SK-N-SH (cell line): ENCODE measurements at regions of chr17 and their contacts with region 1.

Region 1: DNA sequence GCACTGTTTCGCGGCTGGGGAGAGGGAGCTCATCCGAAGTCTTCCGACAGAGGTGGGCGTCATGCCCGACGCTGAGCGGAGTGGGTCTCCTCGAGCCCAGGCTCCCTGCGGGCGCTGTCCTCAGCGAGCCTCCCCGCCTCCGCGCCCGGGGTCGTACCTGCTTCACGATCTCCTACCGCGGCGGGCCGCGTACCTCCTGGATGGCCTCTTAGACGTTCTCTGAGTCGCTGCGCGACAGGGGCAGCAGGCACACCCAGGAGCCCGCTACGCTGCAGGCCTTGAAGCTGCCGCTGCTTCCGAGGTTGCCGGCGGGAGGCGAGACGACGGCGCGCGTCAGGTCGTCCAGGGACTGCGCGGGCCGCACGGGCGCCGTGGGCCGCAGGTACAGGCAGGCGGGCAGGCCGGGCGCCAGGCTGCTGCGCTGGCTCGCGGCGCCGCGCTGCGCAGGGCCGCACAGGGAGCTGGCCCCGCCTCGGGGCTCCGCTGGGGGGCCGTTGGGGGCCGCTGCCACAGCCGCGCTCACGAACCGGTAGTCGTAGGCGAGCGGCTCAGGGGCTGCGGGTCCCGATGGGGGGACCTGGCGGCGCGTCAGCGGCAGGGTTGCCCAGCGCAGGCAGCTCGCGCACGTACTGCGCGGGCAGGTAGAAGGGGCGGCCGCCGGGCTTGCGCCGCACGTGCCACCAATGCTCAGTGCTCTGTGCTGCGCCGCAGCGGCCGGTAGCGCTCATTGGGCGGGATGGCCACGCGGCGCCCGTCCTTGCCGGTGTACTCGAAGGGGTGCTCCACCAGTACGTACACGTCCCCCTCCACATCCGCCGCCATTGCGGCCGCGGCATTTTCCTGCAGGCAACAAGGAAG is 116.4 kb upstream of the SMURF2 start:
- DNase-seq: peak; percentile 41
- H3K4me3 ChIP-seq: no peak overlapping the region
- H3K27ac ChIP-seq: no peak overlapping the region
- H3K4me1 ChIP-seq: peaks cover 6 to 17% of the 10 kb centered on the region in 2 experiments; a peak in 3 of 4 replicates
- H3K27me3 ChIP-seq: no peaks in the 10 kb centered on the region
- CTCF ChIP-seq: no peak
- EP300 ChIP-seq: no peak
- RAD21 ChIP-seq: no peak

Region 2: DNA sequence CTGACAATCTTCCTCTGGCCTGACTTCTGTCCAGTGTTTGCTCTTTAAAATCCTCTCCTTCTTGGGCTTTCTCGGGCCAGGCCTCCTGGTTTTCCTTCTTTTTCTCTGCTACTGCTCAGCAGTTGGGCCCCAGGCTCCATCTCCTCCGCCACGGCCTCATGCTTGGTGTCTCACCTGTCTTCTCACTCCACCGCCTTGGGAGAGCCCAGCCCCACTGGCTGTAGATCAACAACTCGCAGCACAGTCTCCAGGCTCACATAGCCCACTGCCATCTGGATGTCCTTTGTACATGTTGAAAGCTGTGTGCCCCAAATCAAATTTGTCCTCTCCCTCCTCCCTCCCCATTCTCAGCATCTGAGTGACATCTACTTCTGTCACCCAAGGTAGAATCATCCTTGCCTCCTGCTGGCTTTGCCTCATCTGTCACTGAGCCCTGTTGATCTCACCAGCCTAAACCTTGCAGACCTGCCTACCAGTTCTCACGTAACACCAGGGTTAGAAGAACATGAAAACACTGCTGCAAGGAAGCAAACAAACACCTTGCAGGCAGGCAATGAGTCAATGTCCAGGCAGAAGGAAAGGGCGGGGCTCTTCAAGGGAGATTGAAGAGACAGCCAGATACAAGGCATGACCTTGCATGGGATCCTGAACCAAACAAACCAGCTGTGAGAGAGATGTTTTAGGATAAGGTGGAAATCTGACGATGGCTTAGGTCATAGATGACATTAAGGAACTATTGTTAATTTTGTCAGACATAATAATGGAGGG is 13.1 kb before region 1 on chr17:
- CTCF ChIA-PET with region 1: interaction called, 12 read pairs
- POLR2A ChIA-PET with region 1: interaction called, 3 read pairs
- DNase-seq: no peak
- H3K4me3 ChIP-seq: no peak overlapping the region
- H3K27ac ChIP-seq: no peak overlapping the region
- H3K4me1 ChIP-seq: no peaks in the 10 kb centered on the region
- H3K27me3 ChIP-seq: no peaks in the 10 kb centered on the region
- CTCF ChIP-seq: no peak
- EP300 ChIP-seq: no peak
- RAD21 ChIP-seq: no peak